ENCODE measurements at regions of chr5 and their contacts with region 1.

Region 1: GRCh38 chr5:122192497-122193496 is 63.5 kb downstream of the ZNF474 start:
- DNase-seq: no peak
- H3K4me3 Mint-ChIP-seq: no peak overlapping the region
- H3K27ac Mint-ChIP-seq: no peak overlapping the region
- H3K4me1 Mint-ChIP-seq: no peaks in the 10 kb centered on the region
- H3K27me3 Mint-ChIP-seq: peaks cover 2% of the 10 kb centered on the region

Region 2: DNA sequence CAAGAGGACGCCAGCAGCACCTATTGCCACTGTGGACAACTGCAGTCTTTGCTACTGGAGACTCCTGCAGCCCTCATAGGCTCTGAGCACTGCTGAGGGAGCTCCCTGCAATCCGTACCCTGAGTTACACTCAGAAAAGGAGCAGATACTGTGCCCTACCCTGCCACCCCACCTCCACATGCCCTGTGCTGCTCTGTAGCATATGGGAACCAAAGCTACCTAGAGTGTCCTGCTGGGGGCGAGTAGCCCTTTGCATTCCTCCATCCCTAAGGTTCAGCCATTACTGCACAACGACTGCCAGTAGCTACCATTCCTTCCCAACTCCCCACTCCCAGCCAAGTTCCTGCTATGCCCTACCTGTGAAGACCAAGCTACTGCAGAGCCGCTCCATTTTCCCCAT is 29.1 kb after region 1 on chr5:
- intact Hi-C with region 1: no loop called
- DNase-seq: no peak
- H3K4me3 Mint-ChIP-seq: no peak overlapping the region
- H3K27ac Mint-ChIP-seq: no peak overlapping the region
- H3K4me1 Mint-ChIP-seq: no peaks in the 10 kb centered on the region
- H3K27me3 Mint-ChIP-seq: no peaks in the 10 kb centered on the region

Region 3: DNA sequence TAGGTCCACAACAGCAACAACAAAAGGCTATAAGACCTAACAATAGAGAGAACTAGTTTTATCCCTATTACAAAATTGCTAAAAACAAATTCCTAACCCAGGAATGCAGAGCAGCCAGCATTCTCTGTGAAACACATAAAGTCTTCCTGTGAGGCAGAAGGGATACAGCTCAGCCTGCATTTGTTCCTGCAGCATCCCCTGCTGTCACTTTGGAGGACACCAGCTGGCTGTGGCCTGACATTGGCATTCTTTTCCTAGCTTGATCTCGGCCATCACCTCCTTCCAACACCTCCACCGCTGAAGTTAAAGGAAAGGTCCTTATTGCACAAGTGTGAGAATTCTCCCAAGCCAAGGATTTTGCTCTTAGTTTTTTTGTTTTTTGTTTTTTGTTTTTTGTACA is 305.4 kb after region 1 on chr5:
- intact Hi-C with region 1: loop called (anchors 10 kb)
- DNase-seq: no peak
- H3K4me3 Mint-ChIP-seq: no peak overlapping the region
- H3K27ac Mint-ChIP-seq: no peak overlapping the region
- H3K4me1 Mint-ChIP-seq: no peaks in the 10 kb centered on the region
- H3K27me3 Mint-ChIP-seq: peaks cover 6% of the 10 kb centered on the region